GM12878 (cell line): ENCODE measurements at regions of chr1 and their contacts with region 1.

Region 1: GRCh38 chr1:224774378-224774777 is 155.1 kb upstream of the DNAH14 start:
- DNase-seq: no peak
- ATAC-seq: peak; percentile 91
- H3K4me3 ChIP-seq: no peak overlapping the region
- H3K27ac ChIP-seq: no peak overlapping the region
- H3K4me1 ChIP-seq: no peaks in the 10 kb centered on the region
- H3K27me3 ChIP-seq: no peaks in the 10 kb centered on the region
- CTCF ChIP-seq: peak in 2 of 3 experiments; percentile 42 to 59; a peak in 4 of 6 replicates
- EP300 ChIP-seq: no peak
- POLR2A ChIP-seq: no peak
- RAD21 ChIP-seq: peak; percentile 52

Region 2: GRCh38 chr1:224710196-224710595 is 64.2 kb before region 1 on chr1:
- CTCF ChIA-PET with region 1: no interaction called
- POLR2A ChIA-PET with region 1: no interaction called
- RAD21 ChIA-PET with region 1: no interaction called
- SMC1A ChIA-PET with region 1: no interaction called
- in situ Hi-C with region 1: no loop called
- intact Hi-C with region 1: no loop called
- DNase-seq: no peak
- ATAC-seq: no peak
- H3K4me3 ChIP-seq: no peak overlapping the region
- H3K27ac ChIP-seq: no peak overlapping the region
- H3K4me1 ChIP-seq: no peaks in the 10 kb centered on the region
- H3K27me3 ChIP-seq: no peaks in the 10 kb centered on the region
- CTCF ChIP-seq: no peak
- EP300 ChIP-seq: no peak
- POLR2A ChIP-seq: no peak
- RAD21 ChIP-seq: no peak

Region 3: GRCh38 chr1:224747578-224747977 is 26.8 kb before region 1 on chr1:
- CTCF ChIA-PET with region 1: interaction called, 3 read pairs
- POLR2A ChIA-PET with region 1: interaction called, 3 read pairs
- RAD21 ChIA-PET with region 1: interaction called, 3 read pairs
- SMC1A ChIA-PET with region 1: interaction called, 11 read pairs
- in situ Hi-C with region 1: no loop called
- intact Hi-C with region 1: no loop called
- DNase-seq: no peak
- ATAC-seq: peak; percentile 45
- H3K4me3 ChIP-seq: no peak overlapping the region
- H3K27ac ChIP-seq: no peak overlapping the region
- H3K4me1 ChIP-seq: peaks cover 53% of the 10 kb centered on the region
- H3K27me3 ChIP-seq: no peaks in the 10 kb centered on the region
- CTCF ChIP-seq: no peak
- EP300 ChIP-seq: no peak
- POLR2A ChIP-seq: no peak
- RAD21 ChIP-seq: no peak

Region 4: DNA sequence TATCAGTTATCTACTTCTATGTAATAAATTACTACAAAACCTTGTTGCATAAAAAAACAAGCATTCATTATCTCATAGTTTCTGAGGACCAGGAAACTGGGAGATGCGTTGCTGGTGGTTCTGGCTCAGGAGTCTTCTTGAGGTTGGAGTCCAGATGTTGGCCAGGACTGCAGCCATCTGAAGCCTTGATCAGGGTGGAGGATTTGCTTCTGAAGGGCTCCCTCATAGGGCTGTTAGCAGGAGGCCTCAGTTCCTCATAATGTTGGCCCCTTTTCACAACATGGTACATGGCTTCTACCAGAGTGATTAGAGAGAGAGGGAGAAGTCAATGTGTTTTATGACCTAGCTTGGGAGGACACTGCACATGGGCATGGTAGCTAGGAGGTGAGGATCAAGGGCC is 20.9 kb before region 1 on chr1:
- CTCF ChIA-PET with region 1: interaction called, 3 read pairs
- POLR2A ChIA-PET with region 1: interaction called, 3 read pairs
- RAD21 ChIA-PET with region 1: interaction called, 4 read pairs
- SMC1A ChIA-PET with region 1: interaction called, 12 read pairs
- in situ Hi-C with region 1: no loop called
- intact Hi-C with region 1: no loop called
- DNase-seq: no peak
- ATAC-seq: peak; percentile 43
- H3K4me3 ChIP-seq: no peak overlapping the region
- H3K27ac ChIP-seq: no peak overlapping the region
- H3K4me1 ChIP-seq: peaks cover 34% of the 10 kb centered on the region
- H3K27me3 ChIP-seq: no peaks in the 10 kb centered on the region
- CTCF ChIP-seq: no peak
- EP300 ChIP-seq: no peak
- POLR2A ChIP-seq: no peak
- RAD21 ChIP-seq: no peak

Region 5: GRCh38 chr1:224759681-224760091 is 14.7 kb before region 1 on chr1:
- CTCF ChIA-PET with region 1: interaction called, 4 read pairs
- POLR2A ChIA-PET with region 1: interaction called, 3 read pairs
- RAD21 ChIA-PET with region 1: interaction called, 4 read pairs
- SMC1A ChIA-PET with region 1: interaction called, 12 read pairs
- in situ Hi-C with region 1: no loop called
- intact Hi-C with region 1: no loop called
- DNase-seq: no peak
- ATAC-seq: no peak
- H3K4me3 ChIP-seq: no peak overlapping the region
- H3K27ac ChIP-seq: no peak overlapping the region
- H3K4me1 ChIP-seq: no peaks in the 10 kb centered on the region
- H3K27me3 ChIP-seq: no peaks in the 10 kb centered on the region
- CTCF ChIP-seq: no peak
- EP300 ChIP-seq: no peak
- POLR2A ChIP-seq: no peak
- RAD21 ChIP-seq: no peak